Head of caudate nucleus (tissue), 42 donors: ENCODE measurements at regions of chr6 and their contacts with region 1.

Region 1: GRCh38 chr6:124795643-124796463 is 166.4 kb upstream of the RNF217 start:
- DNase-seq: peak; percentile 24 to 87 (median 61)

Region 2: DNA sequence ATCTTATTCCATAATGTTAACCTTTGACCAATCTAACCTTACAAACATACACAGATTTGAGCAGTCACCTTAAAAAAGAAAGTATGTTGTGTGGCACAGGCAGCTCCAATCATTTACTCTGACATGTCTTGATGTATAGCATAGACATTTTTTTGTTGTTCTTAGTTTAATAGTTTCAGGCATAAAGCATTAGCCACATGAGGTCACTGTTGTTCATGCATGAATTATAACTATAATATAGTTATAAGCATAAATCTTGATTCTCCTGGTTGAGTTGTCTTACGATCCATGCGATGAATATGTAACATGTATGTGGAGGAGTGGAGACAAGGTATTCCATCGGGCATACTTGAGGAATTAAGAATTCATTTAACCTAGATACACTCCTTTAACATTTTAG is 1018.3 kb before region 1 on chr6:
- intact Hi-C with region 1: loop called (anchors 10 kb)
- DNase-seq: peak in 2 of 42 donors; percentile 4 to 6

Region 3: DNA sequence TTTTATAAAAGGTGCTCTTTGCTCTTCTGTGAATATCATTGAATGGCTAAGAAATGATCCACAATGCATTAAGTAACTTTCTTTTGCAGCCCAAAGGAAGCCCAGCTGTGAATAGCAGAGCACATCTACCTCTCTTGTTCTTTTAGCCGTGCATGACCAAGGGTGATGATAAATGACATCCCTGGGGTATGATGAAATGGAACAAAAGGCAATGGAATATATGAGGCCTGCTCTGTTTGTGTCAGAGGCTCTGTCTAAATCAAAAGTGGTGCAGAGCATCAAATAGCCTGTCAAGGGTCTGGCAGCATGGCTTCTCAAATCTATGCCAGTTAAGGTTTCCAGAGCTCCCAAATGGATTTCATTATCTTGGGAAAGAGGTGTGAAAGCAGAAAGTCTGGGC is 196.2 kb before region 1 on chr6:
- intact Hi-C with region 1: no loop called
- DNase-seq: no peak